Left lung (tissue), 14 donors: ENCODE measurements at regions of chr2 and their contacts with region 1.

Region 1: DNA sequence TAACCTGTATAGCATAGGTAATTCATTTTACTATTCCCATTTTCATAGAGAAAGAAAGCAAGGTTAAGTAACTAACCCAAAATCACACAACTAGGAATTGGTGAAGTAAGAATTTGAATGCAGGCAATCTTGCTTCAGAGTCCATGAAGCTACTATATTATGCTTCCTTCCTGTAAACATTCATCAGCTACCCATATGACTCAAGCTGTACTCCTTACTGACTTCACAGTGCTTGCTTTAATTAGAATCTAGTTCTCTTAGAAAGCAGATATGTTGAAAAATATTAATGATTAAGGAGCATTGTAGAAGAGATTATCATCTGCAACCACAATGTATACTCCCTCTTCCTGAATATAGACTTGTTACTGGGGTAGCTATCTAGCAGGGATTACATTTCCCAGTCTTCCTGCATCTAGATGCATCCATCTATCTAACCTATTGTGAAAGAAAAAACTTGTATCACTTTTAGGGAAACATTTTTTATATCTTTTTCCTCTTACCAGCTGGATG is 961.6 kb upstream of the CHAC2 start:
- DNase-seq: no peak
- ATAC-seq: no peak
- H3K4me3 ChIP-seq: no peak overlapping the region
- H3K27ac ChIP-seq: no peak overlapping the region
- H3K4me1 ChIP-seq: no peaks in the 10 kb centered on the region
- H3K27me3 ChIP-seq: no peaks in the 10 kb centered on the region
- CTCF ChIP-seq: no peak

Region 2: DNA sequence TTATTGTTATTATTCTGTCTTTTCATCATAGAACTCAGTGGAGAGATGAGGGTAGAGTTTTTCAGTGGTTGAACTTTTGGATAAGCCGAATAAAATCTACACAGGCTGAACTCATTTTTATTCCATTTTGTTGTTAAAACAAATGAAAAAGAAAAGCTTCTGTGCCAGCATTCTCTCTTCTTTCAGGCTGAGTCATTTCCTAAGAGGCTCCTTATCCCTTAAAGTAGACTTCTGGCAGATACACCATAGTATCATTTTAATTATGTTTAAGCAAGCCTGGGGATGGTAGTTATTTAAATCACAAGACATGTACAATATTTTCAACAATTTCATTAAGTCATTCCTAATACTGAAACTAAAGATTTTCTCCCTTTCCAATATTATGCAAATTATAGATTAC is 410.0 kb before region 1 on chr2:
- intact Hi-C with region 1: no loop called
- DNase-seq: no peak
- ATAC-seq: no peak
- H3K4me3 ChIP-seq: no peak overlapping the region
- H3K27ac ChIP-seq: no peak overlapping the region
- H3K4me1 ChIP-seq: no peaks in the 10 kb centered on the region
- H3K27me3 ChIP-seq: no peaks in the 10 kb centered on the region
- CTCF ChIP-seq: no peak

Region 3: GRCh38 chr2:52831216-52831615 is 25.3 kb after region 1 on chr2:
- intact Hi-C with region 1: loop called in 1 of 2 experiments (anchors 2 kb)
- DNase-seq: no peak
- ATAC-seq: no peak
- H3K4me3 ChIP-seq: no peak overlapping the region
- H3K27ac ChIP-seq: no peak overlapping the region
- H3K4me1 ChIP-seq: no peaks in the 10 kb centered on the region
- H3K27me3 ChIP-seq: no peaks in the 10 kb centered on the region
- CTCF ChIP-seq: no peak